ENCODE measurements at regions of chr6 and their contacts with region 1.

Region 1: GRCh38 chr6:35048631-35049083 is 92.5 kb downstream of the TCP11 start:
- DNase-seq: peak in 1 of 2 donors; percentile 55
- ATAC-seq: peak in 7 of 8 donors; percentile 16 to 54 (median 36)
- H3K4me3 ChIP-seq: peak overlapping the region in 2 of 10 donors; percentile 6 to 33
- H3K27ac ChIP-seq: peak overlapping the region; percentile 50 to 93 (median 82)
- H3K4me1 ChIP-seq: peaks cover 50 to 100% (median 94%) of the 10 kb centered on the region in 9 donors
- H3K27me3 ChIP-seq: no peaks in the 10 kb centered on the region
- CTCF ChIP-seq: peak in 5 of 9 donors; percentile 24 to 48 (median 33)

Region 2: GRCh38 chr6:35016502-35017321 is 31.9 kb before region 1 on chr6:
- intact Hi-C with region 1: loop called in 3 of 10 experiments (anchors 5 kb)
- DNase-seq: peak; percentile 37 to 66
- ATAC-seq: peak; percentile 67 to 84 (median 81)
- H3K4me3 ChIP-seq: peak overlapping the region; percentile 37 to 73 (median 59)
- H3K27ac ChIP-seq: peak overlapping the region; percentile 89 to 99 (median 95)
- H3K4me1 ChIP-seq: peaks cover 15 to 89% (median 76%) of the 10 kb centered on the region in 9 donors
- H3K27me3 ChIP-seq: no peaks in the 10 kb centered on the region
- CTCF ChIP-seq: no peak

Region 3: DNA sequence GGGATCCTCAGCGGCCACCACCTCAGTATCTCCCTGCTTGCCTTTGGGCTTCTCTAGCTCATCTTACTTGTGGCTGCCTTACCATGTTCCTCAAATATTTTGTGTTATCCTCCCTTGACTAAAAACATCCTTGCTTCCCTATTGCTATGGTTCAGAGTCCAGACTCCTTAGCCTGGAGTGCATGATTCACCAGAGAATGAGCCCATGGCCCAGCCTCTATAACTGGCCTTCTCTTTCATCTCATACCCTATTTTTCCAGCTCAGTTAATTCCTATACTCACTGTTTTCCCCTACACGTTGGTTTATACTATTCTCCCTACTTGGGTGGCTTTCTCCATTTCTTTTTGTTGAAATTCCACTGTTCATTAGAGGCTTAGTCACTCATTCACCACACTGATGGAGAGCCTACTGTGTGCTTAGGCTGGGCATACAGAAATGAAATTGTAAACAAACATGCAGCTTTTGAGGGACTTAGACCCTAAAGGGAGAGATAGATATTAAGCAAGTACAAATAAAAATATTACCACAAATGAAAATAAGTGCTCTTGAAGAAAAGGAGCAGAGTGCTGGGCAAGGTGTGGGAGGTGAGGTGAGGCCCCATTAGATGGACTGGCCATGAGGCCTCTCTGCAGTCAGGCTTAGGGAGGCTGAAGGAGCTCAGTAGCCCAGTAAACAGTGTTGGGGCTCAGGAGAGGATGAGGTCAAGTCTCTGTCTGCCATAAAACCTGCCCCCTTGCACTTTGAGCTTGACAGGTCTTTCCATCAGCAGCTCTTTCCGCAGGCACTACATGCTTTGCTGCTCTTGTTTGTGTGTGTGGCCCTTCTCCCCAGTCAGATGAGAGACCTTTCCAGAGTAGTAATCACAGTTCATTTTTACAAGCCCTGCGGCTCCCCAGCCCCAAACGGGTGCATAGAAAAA is 16.8 kb before region 1 on chr6:
- intact Hi-C with region 1: loop called in 1 of 10 experiments (anchors 2 kb)
- DNase-seq: no peak
- ATAC-seq: no peak
- H3K4me3 ChIP-seq: no peak overlapping the region
- H3K27ac ChIP-seq: peak overlapping the region in 2 of 10 donors; percentile 3 to 32
- H3K4me1 ChIP-seq: peaks cover 12 to 88% (median 77%) of the 10 kb centered on the region in 9 donors
- H3K27me3 ChIP-seq: no peaks in the 10 kb centered on the region
- CTCF ChIP-seq: no peak

Region 4: GRCh38 chr6:35096129-35096862 is 47.6 kb after region 1 on chr6:
- intact Hi-C with region 1: loop called in 1 of 10 experiments (anchors 2 kb)
- DNase-seq: no peak
- ATAC-seq: peak in 6 of 8 donors; percentile 33 to 68 (median 46)
- H3K4me3 ChIP-seq: no peak overlapping the region
- H3K27ac ChIP-seq: peak overlapping the region in 9 of 10 donors; percentile 24 to 66 (median 54)
- H3K4me1 ChIP-seq: peaks cover 14 to 39% (median 31%) of the 10 kb centered on the region in 9 donors
- H3K27me3 ChIP-seq: no peaks in the 10 kb centered on the region
- CTCF ChIP-seq: no peak